Activated T-helper 1 cell treated with anti-CD3 and anti-CD28 coated beads, Interleukin-12 subunit alpha, Interleukin-12 subunit beta, Interleukin-2, Interleukin-4 antibody, amounts not matched to agents 30 ng/mL and 10 ng/mL and 1 ng/mL, durations not matched to agents 14 hours and 24 hours and 36 hours (primary cell): ENCODE measurements at regions of chr3 and their contacts with region 1.

Region 1: GRCh38 chr3:138594150-138594934 is at the start of gene CEP70:
- DNase-seq: peak; percentile 79
- H3K4me3 Mint-ChIP-seq: peak within 1 kb of the TSS; percentile 87
- H3K27ac Mint-ChIP-seq: peak within 1 kb of the TSS; percentile 86
- H3K4me1 Mint-ChIP-seq: peaks cover 11% of the 10 kb centered on the region
- H3K27me3 Mint-ChIP-seq: peaks cover 3% of the 10 kb centered on the region
- total RNA-seq, gene CEP70: 2.4 and 3.1 TPM in 2 replicates

Region 2: GRCh38 chr3:138186803-138187295 is 407.5 kb before region 1 on chr3:
- intact Hi-C with region 1: loop called (anchors 1 kb)
- DNase-seq: peak; percentile 82
- H3K4me3 Mint-ChIP-seq: peak overlapping the region; percentile 95
- H3K27ac Mint-ChIP-seq: peak overlapping the region; percentile 89
- H3K4me1 Mint-ChIP-seq: peaks cover 38% of the 10 kb centered on the region
- H3K27me3 Mint-ChIP-seq: peaks cover 5% of the 10 kb centered on the region

Region 3: GRCh38 chr3:138347960-138348753 is 246.2 kb before region 1 on chr3 and contains the start of gene MRAS:
- intact Hi-C with region 1: no loop called
- DNase-seq: no peak
- H3K4me3 Mint-ChIP-seq: peak within 1 kb of the TSS; percentile 93
- H3K27ac Mint-ChIP-seq: peak within 1 kb of the TSS; percentile 69
- H3K4me1 Mint-ChIP-seq: peaks cover 12% of the 10 kb centered on the region
- H3K27me3 Mint-ChIP-seq: peaks cover 36% of the 10 kb centered on the region
- total RNA-seq, gene MRAS: 0.05 and 0.42 TPM in 2 replicates

Region 4: DNA sequence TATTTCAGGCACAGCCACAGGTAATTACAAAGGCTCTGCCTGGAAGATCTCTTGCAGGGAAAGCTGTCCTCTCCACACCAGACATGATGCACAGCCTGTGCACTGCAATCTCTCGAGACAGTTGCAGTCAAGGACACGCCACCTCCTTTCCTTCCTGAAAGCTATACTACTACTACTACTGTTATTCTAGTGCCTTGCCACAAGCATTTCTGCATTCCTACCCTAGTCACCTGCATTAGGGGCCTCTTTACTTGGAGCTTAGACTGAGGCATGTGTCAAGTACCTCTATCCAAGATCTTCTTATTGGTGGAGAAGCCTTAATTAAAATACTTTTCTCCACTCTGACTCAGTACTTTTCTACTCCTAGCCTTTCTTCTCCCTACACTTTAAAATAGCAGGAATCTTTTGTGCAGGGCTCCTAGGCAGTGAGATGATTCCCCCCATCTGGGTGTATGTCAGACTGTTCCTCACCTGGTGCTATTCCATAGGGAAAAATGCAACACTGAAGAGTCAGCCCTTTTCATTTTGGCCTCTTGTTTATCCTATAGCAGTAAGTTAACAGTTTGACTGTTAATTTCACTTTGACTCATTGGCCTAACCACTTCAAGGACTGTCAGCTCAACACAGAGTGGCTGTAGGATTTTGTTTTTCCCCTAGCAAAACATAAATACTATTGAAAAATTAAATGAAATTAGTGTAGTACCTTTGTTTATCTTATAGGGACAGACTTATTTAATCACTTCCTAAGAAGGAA is 81.1 kb before region 1 on chr3:
- intact Hi-C with region 1: loop called (anchors 5 kb)
- DNase-seq: peak; percentile 3
- H3K4me3 Mint-ChIP-seq: peak overlapping the region; percentile 37
- H3K27ac Mint-ChIP-seq: peak overlapping the region; percentile 13
- H3K4me1 Mint-ChIP-seq: peaks cover 28% of the 10 kb centered on the region
- H3K27me3 Mint-ChIP-seq: no peaks in the 10 kb centered on the region

Region 5: DNA sequence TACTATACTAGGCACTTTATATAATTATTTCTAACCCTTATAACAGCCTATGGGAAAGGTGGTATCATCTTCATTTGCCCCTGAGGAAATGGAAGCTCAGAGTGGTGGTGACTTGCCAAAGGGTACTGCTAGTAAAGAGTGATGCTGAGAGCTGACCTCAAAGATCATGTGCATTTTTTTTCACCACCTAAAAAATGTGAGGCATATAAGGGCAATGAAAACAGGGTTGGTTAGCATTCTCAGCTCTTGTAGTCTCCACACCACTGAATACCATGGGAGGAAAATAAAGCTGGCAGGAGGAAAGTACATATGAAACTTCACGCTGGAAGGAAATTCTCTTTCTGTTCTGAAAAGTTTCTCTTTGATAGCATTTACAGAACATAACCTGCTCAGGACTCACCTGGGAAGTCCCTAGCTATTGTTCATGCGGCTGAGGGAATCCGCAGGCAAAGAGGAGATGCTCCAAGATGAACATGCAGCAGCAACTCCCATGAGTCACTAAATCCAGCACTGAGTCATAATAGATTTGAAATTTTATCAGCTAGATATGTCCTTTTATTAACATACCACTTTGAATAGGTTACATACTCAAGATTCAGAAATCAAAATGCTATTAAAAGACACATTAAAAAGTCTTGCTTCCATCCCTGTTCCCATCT is 31.5 kb after region 1 on chr3:
- intact Hi-C with region 1: no loop called
- DNase-seq: no peak
- H3K4me3 Mint-ChIP-seq: no peak overlapping the region
- H3K27ac Mint-ChIP-seq: no peak overlapping the region
- H3K4me1 Mint-ChIP-seq: no peaks in the 10 kb centered on the region
- H3K27me3 Mint-ChIP-seq: no peaks in the 10 kb centered on the region

Region 6: GRCh38 chr3:138694287-138695007 is 100.1 kb after region 1 on chr3:
- intact Hi-C with region 1: loop called (anchors 2 kb)
- DNase-seq: no peak
- H3K4me3 Mint-ChIP-seq: no peak overlapping the region
- H3K27ac Mint-ChIP-seq: no peak overlapping the region
- H3K4me1 Mint-ChIP-seq: no peaks in the 10 kb centered on the region
- H3K27me3 Mint-ChIP-seq: no peaks in the 10 kb centered on the region

Region 7: GRCh38 chr3:138748190-138748589 is 153.8 kb after region 1 on chr3:
- intact Hi-C with region 1: no loop called
- DNase-seq: no peak
- H3K4me3 Mint-ChIP-seq: no peak overlapping the region
- H3K27ac Mint-ChIP-seq: no peak overlapping the region
- H3K4me1 Mint-ChIP-seq: peaks cover 7% of the 10 kb centered on the region
- H3K27me3 Mint-ChIP-seq: no peaks in the 10 kb centered on the region

Region 8: GRCh38 chr3:138923531-138923994 is 329.2 kb after region 1 on chr3:
- intact Hi-C with region 1: loop called (anchors 1 kb)
- DNase-seq: peak; percentile 74
- H3K4me3 Mint-ChIP-seq: no peak overlapping the region
- H3K27ac Mint-ChIP-seq: no peak overlapping the region
- H3K4me1 Mint-ChIP-seq: peaks cover 4% of the 10 kb centered on the region
- H3K27me3 Mint-ChIP-seq: peaks cover 16% of the 10 kb centered on the region